B cell (primary cell): ENCODE measurements at regions of chr17 and their contacts with region 1.

Region 1: DNA sequence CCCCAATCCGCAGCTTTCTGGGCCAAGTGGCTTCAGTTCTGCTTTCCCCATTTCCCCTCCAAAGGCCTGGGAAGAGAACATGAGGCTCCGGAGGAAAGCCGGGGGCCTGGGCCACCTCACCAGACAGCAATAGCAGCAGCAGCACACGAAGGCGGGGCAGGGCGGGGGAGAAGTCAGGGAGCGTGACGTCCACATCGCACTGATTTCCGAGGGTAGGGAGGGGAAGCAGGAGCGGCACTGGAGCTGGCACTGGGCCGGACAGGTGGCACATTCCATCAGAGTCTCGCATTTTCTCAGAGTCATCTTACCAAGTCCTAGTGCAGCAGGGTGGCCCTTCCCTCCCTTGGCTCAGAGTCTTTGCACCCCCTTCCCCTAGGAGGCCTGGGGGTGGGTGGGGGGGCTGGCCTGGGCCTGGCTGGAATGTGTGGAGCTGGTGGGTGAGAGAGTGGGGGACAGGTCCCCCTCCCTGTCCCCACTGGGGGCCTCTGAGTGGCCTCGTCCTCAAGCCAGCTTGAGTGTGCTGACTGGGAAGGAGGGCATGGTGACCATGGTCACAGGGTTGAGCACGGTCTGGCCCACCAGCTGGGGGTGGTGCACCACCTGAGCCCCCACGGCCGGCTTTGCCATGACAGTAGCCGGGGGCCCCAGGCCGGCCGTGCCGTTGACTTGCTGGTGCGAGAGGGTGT is 14.3 kb downstream of the MNT start:
- DNase-seq: no peak
- ATAC-seq: no peak
- H3K4me3 ChIP-seq: no peak overlapping the region
- H3K4me3 Mint-ChIP-seq: no peak overlapping the region
- H3K27ac ChIP-seq: no peak overlapping the region
- H3K27ac Mint-ChIP-seq: no peak overlapping the region
- H3K4me1 ChIP-seq: peaks cover 14 to 21% of the 10 kb centered on the region in 2 donors
- H3K4me1 Mint-ChIP-seq: peaks cover 18% of the 10 kb centered on the region
- H3K27me3 ChIP-seq: no peaks in the 10 kb centered on the region
- H3K27me3 Mint-ChIP-seq: no peaks in the 10 kb centered on the region
- CTCF ChIP-seq: no peak

Region 2: DNA sequence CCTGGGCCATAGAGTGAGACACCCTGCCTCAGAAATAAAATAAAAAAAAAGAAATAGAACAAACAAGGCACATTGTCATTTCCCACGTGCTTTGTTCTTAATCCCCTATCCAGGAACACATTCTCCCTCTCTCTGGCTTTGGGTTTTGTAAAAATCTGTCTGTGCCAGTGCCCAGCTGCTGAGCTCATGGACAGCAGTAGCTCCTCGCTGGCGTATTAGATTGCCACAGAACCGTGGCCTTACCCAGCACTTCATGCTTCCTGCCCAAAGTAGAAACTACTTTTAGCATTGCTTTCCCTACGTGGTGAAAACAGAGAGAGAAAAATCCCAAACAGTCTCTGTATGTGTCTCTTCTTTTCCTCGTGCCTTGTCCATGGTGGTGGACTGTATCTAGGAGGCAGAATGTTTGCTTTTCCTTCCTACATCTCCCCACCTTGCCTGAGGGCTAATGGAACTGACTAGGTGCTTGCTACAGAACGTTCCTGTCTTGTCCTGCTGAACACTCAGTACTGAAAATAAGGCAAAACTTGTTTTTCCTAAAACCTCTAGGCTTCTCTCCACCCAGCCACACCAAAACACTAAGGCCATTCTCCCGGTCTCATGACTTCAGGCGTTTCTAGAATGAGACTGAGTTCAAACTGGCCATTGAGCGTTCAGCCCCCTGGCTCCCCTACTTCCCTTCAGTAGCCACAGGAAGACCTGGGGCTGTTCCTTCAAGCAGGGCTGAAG is 11.8 kb before region 1 on chr17:
- CTCF ChIA-PET with region 1: interaction called, 13 read pairs
- POLR2A ChIA-PET with region 1: no interaction called
- intact Hi-C with region 1: no loop called
- DNase-seq: no peak
- ATAC-seq: no peak
- H3K4me3 ChIP-seq: no peak overlapping the region
- H3K4me3 Mint-ChIP-seq: no peak overlapping the region
- H3K27ac ChIP-seq: no peak overlapping the region
- H3K27ac Mint-ChIP-seq: no peak overlapping the region
- H3K4me1 ChIP-seq: no peaks in the 10 kb centered on the region
- H3K4me1 Mint-ChIP-seq: no peaks in the 10 kb centered on the region
- H3K27me3 ChIP-seq: no peaks in the 10 kb centered on the region
- H3K27me3 Mint-ChIP-seq: no peaks in the 10 kb centered on the region
- CTCF ChIP-seq: no peak

Region 3: GRCh38 chr17:2401426-2402221 is 15.1 kb after region 1 on chr17:
- CTCF ChIA-PET with region 1: interaction called, 71 read pairs
- POLR2A ChIA-PET with region 1: interaction called, 51 read pairs
- intact Hi-C with region 1: loop called (anchors 1 kb)
- DNase-seq: peak; percentile 96
- ATAC-seq: peak; percentile 57
- H3K4me3 ChIP-seq: peak overlapping the region; percentile 64 to 99 (median 94)
- H3K4me3 Mint-ChIP-seq: peak overlapping the region; percentile 99
- H3K27ac ChIP-seq: peak overlapping the region; percentile 95 to 98
- H3K27ac Mint-ChIP-seq: peak overlapping the region; percentile 99
- H3K4me1 ChIP-seq: peaks cover 32 to 36% of the 10 kb centered on the region in 2 donors
- H3K4me1 Mint-ChIP-seq: peaks cover 38% of the 10 kb centered on the region
- H3K27me3 ChIP-seq: no peaks in the 10 kb centered on the region
- H3K27me3 Mint-ChIP-seq: no peaks in the 10 kb centered on the region
- CTCF ChIP-seq: no peak

Region 4: DNA sequence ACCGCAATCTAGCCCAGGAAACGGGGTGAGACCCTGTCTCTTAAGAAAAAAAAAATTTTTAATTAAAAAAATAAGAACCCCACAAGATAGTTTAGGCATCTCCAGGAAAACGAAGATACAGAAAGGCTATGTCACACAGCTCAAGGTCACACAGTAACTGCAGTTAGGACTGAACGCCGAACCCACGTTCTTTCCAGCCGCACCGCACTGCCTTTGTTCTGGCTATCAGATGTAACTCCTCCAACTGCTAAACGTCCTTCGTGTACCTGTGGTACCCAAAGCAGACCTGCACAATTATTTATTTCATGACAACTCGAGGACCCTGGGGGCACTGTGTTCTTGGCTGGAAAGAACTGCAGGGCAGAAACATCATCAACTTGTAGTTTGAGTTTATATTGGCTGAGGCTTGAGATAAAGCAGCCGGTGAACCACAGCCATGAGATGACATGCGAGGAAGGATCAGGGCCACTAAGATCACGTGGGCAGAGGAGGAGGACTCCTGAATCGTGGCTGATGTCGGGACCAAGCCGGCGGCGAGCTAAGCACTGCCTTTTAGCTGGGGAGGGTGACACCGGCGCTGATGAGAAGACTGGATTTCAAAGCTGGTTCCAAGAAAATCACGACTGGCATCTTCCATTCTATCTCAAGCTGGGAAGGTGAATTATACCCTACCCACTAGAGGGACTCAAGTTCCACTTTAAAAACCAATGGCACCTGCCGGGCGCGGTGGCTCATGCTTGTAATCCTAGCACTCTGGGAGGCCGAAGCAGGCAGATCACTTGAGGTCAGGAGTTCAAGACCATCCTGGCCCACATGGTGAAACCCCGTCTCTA is 35.0 kb after region 1 on chr17:
- CTCF ChIA-PET with region 1: interaction called, 650 read pairs
- POLR2A ChIA-PET with region 1: interaction called, 12 read pairs
- intact Hi-C with region 1: no loop called
- DNase-seq: no peak
- ATAC-seq: no peak
- H3K4me3 ChIP-seq: no peak overlapping the region
- H3K4me3 Mint-ChIP-seq: no peak overlapping the region
- H3K27ac ChIP-seq: no peak overlapping the region
- H3K27ac Mint-ChIP-seq: no peak overlapping the region
- H3K4me1 ChIP-seq: no peaks in the 10 kb centered on the region
- H3K4me1 Mint-ChIP-seq: no peaks in the 10 kb centered on the region
- H3K27me3 ChIP-seq: no peaks in the 10 kb centered on the region
- H3K27me3 Mint-ChIP-seq: no peaks in the 10 kb centered on the region
- CTCF ChIP-seq: no peak

Region 5: DNA sequence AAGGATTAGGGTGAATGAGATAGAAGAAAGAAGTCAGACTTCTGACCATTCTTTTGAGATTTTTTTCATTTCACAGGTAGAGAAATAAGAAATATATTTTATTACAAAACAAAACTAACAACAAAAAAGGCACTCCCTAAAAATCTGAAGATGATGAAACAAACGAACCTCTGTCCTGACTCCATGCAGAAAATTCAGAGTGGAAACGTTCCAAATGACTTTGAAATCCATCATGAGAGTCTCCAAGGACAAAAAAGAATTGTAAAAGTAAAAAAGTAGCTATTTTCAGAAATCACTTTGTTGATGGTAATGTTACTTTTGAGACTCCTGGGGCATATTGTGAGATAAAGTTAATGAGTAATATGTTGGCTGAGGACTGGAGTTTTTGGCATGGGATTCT is 40.7 kb after region 1 on chr17:
- CTCF ChIA-PET with region 1: interaction called, 16 read pairs
- POLR2A ChIA-PET with region 1: no interaction called
- intact Hi-C with region 1: no loop called
- DNase-seq: no peak
- ATAC-seq: no peak
- H3K4me3 ChIP-seq: no peak overlapping the region
- H3K4me3 Mint-ChIP-seq: no peak overlapping the region
- H3K27ac ChIP-seq: no peak overlapping the region
- H3K27ac Mint-ChIP-seq: no peak overlapping the region
- H3K4me1 ChIP-seq: no peaks in the 10 kb centered on the region
- H3K4me1 Mint-ChIP-seq: no peaks in the 10 kb centered on the region
- H3K27me3 ChIP-seq: no peaks in the 10 kb centered on the region
- H3K27me3 Mint-ChIP-seq: no peaks in the 10 kb centered on the region
- CTCF ChIP-seq: no peak

Region 6: GRCh38 chr17:2547176-2547575 is 160.6 kb after region 1 on chr17:
- CTCF ChIA-PET with region 1: no interaction called
- POLR2A ChIA-PET with region 1: no interaction called
- intact Hi-C with region 1: no loop called
- DNase-seq: no peak
- ATAC-seq: no peak
- H3K4me3 ChIP-seq: no peak overlapping the region
- H3K4me3 Mint-ChIP-seq: no peak overlapping the region
- H3K27ac ChIP-seq: no peak overlapping the region
- H3K27ac Mint-ChIP-seq: no peak overlapping the region
- H3K4me1 ChIP-seq: no peaks in the 10 kb centered on the region
- H3K4me1 Mint-ChIP-seq: peaks cover 5% of the 10 kb centered on the region
- H3K27me3 ChIP-seq: no peaks in the 10 kb centered on the region
- H3K27me3 Mint-ChIP-seq: peaks cover 3% of the 10 kb centered on the region
- CTCF ChIP-seq: no peak

Region 7: GRCh38 chr17:2672026-2672425 is 285.5 kb after region 1 on chr17:
- CTCF ChIA-PET with region 1: interaction called, 10 read pairs
- POLR2A ChIA-PET with region 1: no interaction called
- intact Hi-C with region 1: loop called (anchors 2 kb)
- DNase-seq: no peak
- ATAC-seq: no peak
- H3K4me3 ChIP-seq: no peak overlapping the region
- H3K4me3 Mint-ChIP-seq: no peak overlapping the region
- H3K27ac ChIP-seq: peak overlapping the region in 1 of 2 donors; percentile 9
- H3K27ac Mint-ChIP-seq: no peak overlapping the region
- H3K4me1 ChIP-seq: no peaks in the 10 kb centered on the region
- H3K4me1 Mint-ChIP-seq: peaks cover 3% of the 10 kb centered on the region
- H3K27me3 ChIP-seq: no peaks in the 10 kb centered on the region
- H3K27me3 Mint-ChIP-seq: no peaks in the 10 kb centered on the region
- CTCF ChIP-seq: no peak